ENCODE measurements at regions of chr4 and their contacts with region 1.

Region 1: DNA sequence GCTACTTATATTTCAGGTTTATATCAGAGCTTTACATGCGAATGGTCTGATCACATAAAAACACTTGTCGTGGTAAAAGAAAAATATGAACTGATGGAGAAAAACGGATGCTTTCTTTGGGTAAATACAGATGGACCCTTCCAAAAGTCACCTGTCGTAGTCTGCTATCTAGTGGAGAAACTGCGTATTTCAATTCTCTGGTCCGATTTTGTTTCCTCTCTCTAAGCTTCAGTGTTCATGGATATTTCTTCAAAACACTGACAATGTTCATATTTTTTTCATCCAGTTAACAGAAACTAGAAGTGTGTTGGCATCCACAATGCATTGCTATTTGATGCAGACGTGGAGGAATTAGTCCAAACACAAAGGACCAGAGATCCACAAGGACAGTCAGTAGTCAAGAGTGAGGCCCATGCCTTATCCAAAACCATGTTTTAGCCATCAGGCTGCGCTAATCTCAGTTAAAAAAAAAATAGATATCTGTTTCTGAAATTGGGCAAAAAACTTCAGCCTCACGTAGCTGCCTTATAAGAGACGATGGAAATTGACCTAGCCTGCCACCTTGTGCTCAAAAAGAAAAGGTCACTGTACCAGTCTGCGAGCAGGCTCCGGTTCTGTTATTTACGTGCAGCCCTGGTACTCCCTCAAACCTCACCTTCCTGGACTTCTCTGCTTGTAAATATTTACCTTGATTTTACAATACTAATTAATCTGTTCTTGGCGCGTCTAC is 16.0 kb downstream of the MEPE start:
- DNase-seq: peak; percentile 72
- H3K4me3 Mint-ChIP-seq: peak overlapping the region; percentile 20
- H3K27ac Mint-ChIP-seq: no peak overlapping the region
- H3K4me1 Mint-ChIP-seq: peaks cover 25% of the 10 kb centered on the region
- H3K27me3 Mint-ChIP-seq: no peaks in the 10 kb centered on the region
- CTCF ChIP-seq: peak; percentile 39

Region 2: DNA sequence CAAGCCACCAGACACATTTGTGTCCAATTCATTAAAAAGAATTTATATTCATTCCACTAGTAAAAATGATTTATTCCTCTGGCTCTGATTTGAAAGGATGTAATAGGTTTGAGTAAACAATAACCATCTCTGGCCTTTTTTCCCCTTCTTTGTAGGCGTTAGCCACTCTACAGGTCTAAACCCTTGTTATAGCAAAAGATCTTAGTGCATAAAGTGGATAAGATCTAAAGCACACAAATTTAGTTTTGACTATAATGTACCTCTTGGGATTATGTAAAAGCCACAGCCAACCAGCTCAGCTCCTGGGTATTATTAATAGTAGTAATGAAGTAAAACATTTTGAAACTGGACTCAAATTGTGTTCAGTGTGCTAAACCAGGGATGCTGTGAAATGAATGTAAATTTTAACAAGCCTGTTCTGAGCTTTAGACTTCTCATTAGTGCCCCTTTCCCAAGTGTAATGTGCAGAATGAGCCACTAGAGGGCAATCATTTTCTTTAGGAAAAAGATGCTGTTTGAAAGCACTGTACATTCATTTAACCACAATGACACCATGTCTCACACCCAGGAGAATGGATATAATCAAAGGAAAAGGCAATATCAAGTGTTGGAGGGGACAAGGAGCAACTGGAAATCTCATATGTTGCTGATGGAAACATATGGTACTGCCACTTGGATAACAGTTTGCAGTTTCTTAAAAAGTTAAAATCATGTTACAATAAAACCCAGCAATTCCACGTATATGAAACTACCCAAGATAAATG is 698.1 kb before region 1 on chr4:
- CTCF ChIA-PET with region 1: interaction called, 3 read pairs
- POLR2A ChIA-PET with region 1: no interaction called
- intact Hi-C with region 1: loop called (anchors 10 kb)
- DNase-seq: peak; percentile 85
- H3K4me3 Mint-ChIP-seq: no peak overlapping the region
- H3K27ac Mint-ChIP-seq: no peak overlapping the region
- H3K4me1 Mint-ChIP-seq: peaks cover 11% of the 10 kb centered on the region
- H3K27me3 Mint-ChIP-seq: no peaks in the 10 kb centered on the region
- CTCF ChIP-seq: peak; percentile 81

Region 3: GRCh38 chr4:87375719-87376291 is 473.0 kb before region 1 on chr4:
- CTCF ChIA-PET with region 1: interaction called, 18 read pairs
- POLR2A ChIA-PET with region 1: interaction called, 3 read pairs
- intact Hi-C with region 1: no loop called
- DNase-seq: peak; percentile 78
- H3K4me3 Mint-ChIP-seq: no peak overlapping the region
- H3K27ac Mint-ChIP-seq: peak overlapping the region; percentile 23
- H3K4me1 Mint-ChIP-seq: no peaks in the 10 kb centered on the region
- H3K27me3 Mint-ChIP-seq: no peaks in the 10 kb centered on the region
- CTCF ChIP-seq: peak; percentile 42

Region 4: DNA sequence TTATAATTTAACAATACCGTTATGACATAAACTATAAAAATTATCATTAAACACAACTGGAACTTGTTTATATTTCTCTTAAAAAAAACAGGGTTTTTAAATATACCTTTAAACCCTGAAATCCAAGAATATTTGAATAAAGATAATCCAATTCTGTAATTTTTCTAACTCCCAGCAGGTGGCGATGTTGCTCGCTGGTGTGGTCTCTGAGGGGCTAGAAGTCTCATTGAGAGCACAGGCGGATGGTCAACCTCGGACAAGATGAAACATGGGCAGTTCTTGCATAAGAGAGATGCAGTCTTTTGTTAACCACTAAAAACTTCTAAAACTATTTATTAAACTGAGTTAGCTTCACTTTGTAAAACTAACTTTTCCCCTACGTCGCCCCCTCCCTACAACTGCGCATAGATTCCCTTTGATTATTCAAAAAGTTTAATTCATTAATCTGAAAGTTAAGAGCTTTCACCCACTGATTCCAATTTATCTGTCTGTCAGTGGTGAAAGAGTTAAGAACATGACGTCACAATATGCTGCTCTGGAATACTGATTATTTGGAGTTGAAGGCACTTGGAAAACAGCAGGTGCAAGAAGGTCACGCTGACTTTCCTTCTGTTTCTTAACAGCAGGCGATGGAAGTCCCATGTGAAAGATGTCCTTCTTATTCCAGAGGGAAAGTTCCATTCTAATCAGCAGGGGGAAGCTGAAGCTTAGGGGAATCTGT is 169.2 kb before region 1 on chr4:
- CTCF ChIA-PET with region 1: interaction called, 40 read pairs
- POLR2A ChIA-PET with region 1: interaction called, 4 read pairs
- intact Hi-C with region 1: loop called (anchors 1 kb)
- DNase-seq: peak; percentile 65
- H3K4me3 Mint-ChIP-seq: no peak overlapping the region
- H3K27ac Mint-ChIP-seq: no peak overlapping the region
- H3K4me1 Mint-ChIP-seq: no peaks in the 10 kb centered on the region
- H3K27me3 Mint-ChIP-seq: no peaks in the 10 kb centered on the region
- CTCF ChIP-seq: peak; percentile 76

Region 5: DNA sequence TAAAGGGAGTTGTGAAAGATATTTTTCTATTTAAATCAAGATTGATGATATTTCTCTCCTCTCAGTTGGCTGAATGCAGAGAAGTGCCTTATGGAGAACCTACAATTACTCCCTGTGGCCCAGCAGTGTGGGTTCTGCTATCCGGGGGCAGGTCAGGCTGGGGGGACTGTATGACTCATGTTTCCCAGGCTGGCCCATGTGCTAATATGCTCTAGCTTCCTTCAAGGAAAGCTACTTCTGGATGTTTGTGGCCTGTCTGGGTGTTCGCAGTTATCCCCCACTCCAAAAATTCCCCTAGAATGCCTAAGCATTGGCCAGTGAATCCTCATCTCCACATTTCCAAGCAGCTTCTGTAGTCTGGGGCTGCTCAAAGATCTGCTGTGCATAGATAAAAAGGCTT is 67.8 kb after region 1 on chr4:
- CTCF ChIA-PET with region 1: no interaction called
- POLR2A ChIA-PET with region 1: no interaction called
- intact Hi-C with region 1: no loop called
- DNase-seq: no peak
- H3K4me3 Mint-ChIP-seq: no peak overlapping the region
- H3K27ac Mint-ChIP-seq: no peak overlapping the region
- H3K4me1 Mint-ChIP-seq: no peaks in the 10 kb centered on the region
- H3K27me3 Mint-ChIP-seq: no peaks in the 10 kb centered on the region
- CTCF ChIP-seq: no peak

Region 6: DNA sequence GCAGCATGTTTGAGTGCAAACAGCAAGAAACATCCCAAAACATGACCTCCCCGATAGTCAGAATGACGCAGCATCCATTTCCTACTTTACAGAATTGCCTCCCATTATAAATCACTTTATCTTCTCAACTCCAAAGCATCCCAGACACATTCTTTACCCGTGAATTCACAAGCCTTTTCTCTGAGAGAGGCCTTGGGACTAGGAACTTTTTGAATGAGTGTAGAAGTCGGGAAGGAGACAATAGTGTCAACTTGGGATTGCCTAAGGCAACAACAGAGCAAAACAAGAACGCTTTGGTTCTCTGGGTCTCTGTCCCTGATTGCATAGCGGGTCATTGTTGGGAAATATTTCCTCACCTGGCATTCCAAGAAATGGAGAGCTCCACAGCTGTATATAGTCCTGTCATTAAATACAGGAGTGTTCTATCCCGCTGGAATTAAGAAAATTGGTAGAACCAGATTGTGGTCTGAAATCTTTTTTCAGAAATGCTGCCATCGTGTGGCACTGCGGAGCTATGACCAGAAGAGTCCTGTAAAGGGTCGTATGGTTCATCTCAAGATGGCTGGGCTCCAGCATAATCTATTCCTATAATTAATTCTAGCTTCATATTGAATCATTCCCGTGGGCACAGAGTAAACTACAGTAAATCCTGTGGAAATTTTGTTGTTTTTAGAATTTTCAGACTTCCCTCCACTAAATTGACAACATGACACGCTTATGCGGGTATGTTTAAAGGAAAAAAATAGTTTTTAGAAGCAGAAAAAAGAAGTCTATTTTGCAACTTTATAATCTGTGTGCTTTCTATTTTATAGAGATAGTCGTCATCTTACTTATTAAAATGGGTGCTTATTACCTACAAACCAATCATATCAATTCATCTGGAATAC is 124.7 kb after region 1 on chr4:
- CTCF ChIA-PET with region 1: interaction called, 75 read pairs
- POLR2A ChIA-PET with region 1: interaction called, 16 read pairs
- intact Hi-C with region 1: loop called (anchors 1 kb)
- DNase-seq: peak; percentile 70
- H3K4me3 Mint-ChIP-seq: peak overlapping the region; percentile 19
- H3K27ac Mint-ChIP-seq: no peak overlapping the region
- H3K4me1 Mint-ChIP-seq: peaks cover 11% of the 10 kb centered on the region
- H3K27me3 Mint-ChIP-seq: no peaks in the 10 kb centered on the region
- CTCF ChIP-seq: peak; percentile 84

Region 7: DNA sequence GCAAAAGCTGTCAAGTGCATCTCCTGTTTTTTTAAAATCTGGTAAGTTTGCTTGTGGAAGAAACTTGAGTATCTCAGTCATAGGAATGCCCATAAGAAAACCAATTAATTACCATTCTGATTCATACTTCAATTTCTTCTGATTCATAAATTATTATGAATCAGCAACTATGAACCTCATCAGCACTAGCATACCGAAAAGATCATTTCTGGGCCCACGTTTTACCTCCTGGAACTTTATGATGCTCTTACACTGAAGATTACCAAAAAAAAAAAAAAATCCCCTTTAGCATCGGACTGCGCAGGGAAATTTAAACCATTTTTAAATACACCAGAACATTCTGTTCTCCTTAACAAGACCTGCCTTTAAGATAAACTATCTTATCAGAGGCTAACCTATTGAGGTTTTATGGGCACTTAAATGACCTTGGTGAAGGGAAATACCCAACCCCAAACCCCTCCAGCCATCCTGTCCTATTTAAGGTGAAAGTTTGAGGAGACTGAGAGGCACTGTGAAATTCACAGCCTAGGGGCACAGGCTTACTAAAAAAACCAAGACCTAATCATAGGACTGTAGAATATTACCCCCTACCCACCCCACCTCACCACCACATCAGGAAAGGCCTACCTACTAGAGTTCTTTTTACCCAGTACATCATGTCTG is 347.9 kb after region 1 on chr4:
- CTCF ChIA-PET with region 1: interaction called, 12 read pairs
- POLR2A ChIA-PET with region 1: no interaction called
- intact Hi-C with region 1: no loop called
- DNase-seq: no peak
- H3K4me3 Mint-ChIP-seq: no peak overlapping the region
- H3K27ac Mint-ChIP-seq: no peak overlapping the region
- H3K4me1 Mint-ChIP-seq: no peaks in the 10 kb centered on the region
- H3K27me3 Mint-ChIP-seq: no peaks in the 10 kb centered on the region
- CTCF ChIP-seq: no peak

Measured in MCF 10A (cell line).